Prostate gland (tissue), 2 donors: ENCODE measurements at regions of chr20 and their contacts with region 1.

Region 1: DNA sequence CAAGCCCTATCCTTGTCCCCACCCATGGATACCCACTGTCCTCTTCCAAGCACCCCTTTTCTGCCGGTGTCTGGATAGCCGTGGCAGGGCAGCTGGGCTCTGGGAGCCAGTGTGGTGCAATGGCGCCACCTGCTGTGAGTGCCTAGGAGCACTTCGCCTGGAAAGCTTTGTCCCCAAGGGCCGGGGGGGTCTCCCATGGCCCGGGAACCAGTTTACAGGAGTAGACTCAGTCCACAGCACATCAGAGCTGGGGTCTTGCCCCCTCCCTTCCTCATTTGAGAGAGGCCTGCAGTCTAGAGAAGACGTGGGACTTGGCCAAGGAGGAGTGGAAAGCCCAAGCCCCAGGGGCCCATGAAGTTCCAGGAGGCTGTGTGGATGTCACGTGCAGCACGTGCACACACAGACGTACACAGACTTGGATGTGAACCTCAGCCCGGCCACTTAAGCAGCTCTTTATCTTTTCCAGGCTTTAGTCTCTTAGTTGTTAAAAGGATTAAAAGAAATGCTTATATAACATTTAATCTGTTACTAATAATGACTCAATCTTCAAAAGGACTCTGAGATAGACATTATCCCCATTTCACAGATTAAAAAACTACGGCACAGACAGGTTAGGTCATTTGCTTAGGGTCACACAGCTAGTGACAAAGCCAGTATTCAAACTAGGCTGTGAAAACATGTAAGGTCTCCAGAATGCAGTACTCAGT is 40.9 kb upstream of the CDH22 start:
- DNase-seq: peak; percentile 57
- H3K4me3 ChIP-seq: no peak overlapping the region
- H3K27ac ChIP-seq: no peak overlapping the region
- H3K4me1 ChIP-seq: no peaks in the 10 kb centered on the region
- H3K27me3 ChIP-seq: no peaks in the 10 kb centered on the region
- CTCF ChIP-seq: peak; percentile 74 to 86 (median 80)
- POLR2A ChIP-seq: no peak

Region 2: DNA sequence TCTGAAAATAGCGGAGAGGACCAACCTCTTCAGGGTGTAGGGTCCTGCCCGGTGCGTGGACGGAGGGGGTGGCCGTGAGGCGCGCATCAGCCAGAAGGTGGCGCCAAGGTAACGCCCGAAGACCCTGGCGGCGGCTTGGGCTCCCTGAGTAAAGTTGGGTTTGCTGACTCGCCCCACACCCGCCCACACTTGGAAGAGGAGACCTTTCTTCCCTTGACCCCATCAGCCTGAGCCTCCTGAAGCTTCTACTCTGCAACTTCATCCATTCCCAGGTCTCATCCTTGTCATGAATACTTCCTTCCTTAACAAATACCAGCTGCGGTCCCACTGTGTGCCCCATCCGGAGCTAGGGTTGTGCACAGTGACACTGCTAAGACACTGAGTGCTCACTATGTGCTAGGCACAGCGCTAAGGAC is 216.5 kb before region 1 on chr20:
- intact Hi-C with region 1: loop called (anchors 5 kb)
- DNase-seq: peak; percentile 66
- H3K4me3 ChIP-seq: no peak overlapping the region
- H3K27ac ChIP-seq: no peak overlapping the region
- H3K4me1 ChIP-seq: no peaks in the 10 kb centered on the region
- H3K27me3 ChIP-seq: peaks cover 4% of the 10 kb centered on the region
- CTCF ChIP-seq: peak; percentile 62 to 90 (median 76)
- POLR2A ChIP-seq: no peak

Region 3: DNA sequence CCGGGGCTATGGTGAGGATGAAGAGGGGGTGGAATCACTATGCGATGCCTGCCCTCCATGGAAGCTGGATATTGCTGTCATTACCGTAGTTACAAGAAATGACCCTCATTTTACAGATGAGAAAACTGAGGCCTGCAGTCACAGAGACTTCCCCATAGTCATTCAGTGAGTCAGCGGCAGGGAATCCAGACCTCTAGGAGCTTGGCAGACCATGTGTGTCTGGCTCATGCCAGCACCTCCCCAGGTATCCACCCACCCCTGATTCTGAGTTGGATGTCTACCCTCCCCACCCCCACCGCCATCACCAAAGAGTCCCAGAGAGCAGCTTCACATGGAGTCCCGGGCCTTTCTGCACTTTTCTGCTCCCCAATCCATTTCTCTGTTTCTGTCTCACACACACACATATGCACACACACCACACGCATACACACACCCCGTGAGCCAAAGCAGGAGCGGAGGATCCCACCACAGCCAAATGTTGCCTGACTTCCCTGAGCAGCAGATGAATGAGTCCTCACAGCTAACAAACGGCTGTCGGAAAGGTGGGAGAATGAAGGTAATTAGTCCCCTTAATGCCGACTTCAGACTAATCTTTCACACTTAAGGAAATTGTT is 65.7 kb before region 1 on chr20:
- intact Hi-C with region 1: no loop called
- DNase-seq: no peak
- H3K4me3 ChIP-seq: no peak overlapping the region
- H3K27ac ChIP-seq: no peak overlapping the region
- H3K4me1 ChIP-seq: no peaks in the 10 kb centered on the region
- H3K27me3 ChIP-seq: peaks cover 3% of the 10 kb centered on the region
- CTCF ChIP-seq: no peak
- POLR2A ChIP-seq: no peak

Region 4: GRCh38 chr20:46399401-46399800 is 50.2 kb after region 1 on chr20:
- intact Hi-C with region 1: no loop called
- DNase-seq: peak; percentile 54
- H3K4me3 ChIP-seq: no peak overlapping the region
- H3K27ac ChIP-seq: peak overlapping the region; percentile 98
- H3K4me1 ChIP-seq: peaks cover 44% of the 10 kb centered on the region
- H3K27me3 ChIP-seq: no peaks in the 10 kb centered on the region
- CTCF ChIP-seq: no peak
- POLR2A ChIP-seq: no peak

Region 5: GRCh38 chr20:46689082-46689754 is 340.0 kb after region 1 on chr20 and contains the start of gene TP53RK:
- intact Hi-C with region 1: loop called (anchors 10 kb)
- DNase-seq: peak; percentile 100
- H3K4me3 ChIP-seq: peak within 1 kb of the TSS; percentile 85 to 93
- H3K27ac ChIP-seq: peak within 1 kb of the TSS; percentile 96 to 97
- H3K4me1 ChIP-seq: no peaks in the 10 kb centered on the region
- H3K27me3 ChIP-seq: no peaks in the 10 kb centered on the region
- CTCF ChIP-seq: peak in 2 of 4 experiments; percentile 64 to 65
- POLR2A ChIP-seq: peak; percentile 89
- total RNA-seq, gene TP53RK: 23.2 to 29.6 TPM